Mammary epithelial cell (primary cell): ENCODE measurements at regions of chr15 and their contacts with region 1.

Region 1: GRCh38 chr15:74209997-74210671 is 7.5 kb upstream of the STRA6 start:
- DNase-seq: no peak
- H3K4me3 ChIP-seq: no peak overlapping the region
- H3K27ac ChIP-seq: no peak overlapping the region
- H3K4me1 ChIP-seq: peaks cover 6% of the 10 kb centered on the region
- H3K27me3 ChIP-seq: no peaks in the 10 kb centered on the region
- CTCF ChIP-seq: no peak

Region 2: GRCh38 chr15:74283368-74283767 is 73.2 kb after region 1 on chr15:
- CTCF ChIA-PET with region 1: no interaction called
- dilution Hi-C with region 1: loop called (anchors 5 kb)
- in situ Hi-C with region 1: no loop called
- intact Hi-C with region 1: no loop called
- DNase-seq: no peak
- H3K4me3 ChIP-seq: no peak overlapping the region
- H3K27ac ChIP-seq: no peak overlapping the region
- H3K4me1 ChIP-seq: no peaks in the 10 kb centered on the region
- H3K27me3 ChIP-seq: peaks cover 4% of the 10 kb centered on the region
- CTCF ChIP-seq: no peak